Activated CD8-positive, alpha-beta T cell treated with anti-CD3 and anti-CD28 coated beads for 36 hours (primary cell): ENCODE measurements at regions of chr15 and their contacts with region 1.

Region 1: GRCh38 chr15:39580117-39580484 is 778 bp upstream of the THBS1 start:
- DNase-seq: peak; percentile 94
- ATAC-seq: peak; percentile 92
- H3K4me3 Mint-ChIP-seq: peak overlapping the region; percentile 66
- H3K27ac Mint-ChIP-seq: no peak overlapping the region
- H3K4me1 Mint-ChIP-seq: peaks cover 11% of the 10 kb centered on the region
- H3K27me3 Mint-ChIP-seq: peaks cover 48% of the 10 kb centered on the region
- CTCF ChIP-seq: peak; percentile 99

Region 2: DNA sequence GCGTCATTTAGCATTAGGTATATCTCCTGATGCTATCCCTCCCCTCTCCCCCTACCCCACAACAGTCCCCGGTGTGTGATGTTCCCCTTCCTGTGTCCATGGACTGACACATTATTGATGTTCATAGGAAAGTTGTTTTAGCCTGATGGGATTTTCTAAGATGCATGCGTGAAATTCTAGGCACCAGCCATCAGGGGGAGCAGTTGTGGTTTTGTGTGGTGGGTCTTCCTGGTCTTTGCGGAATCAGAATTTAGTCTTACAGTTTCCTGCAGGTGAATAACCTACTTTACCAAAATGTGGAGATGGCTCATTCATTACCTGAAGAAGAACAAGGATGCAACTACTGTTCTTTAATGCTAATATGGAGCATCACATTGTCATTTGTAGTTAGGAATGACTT is 454.2 kb before region 1 on chr15:
- CTCF ChIA-PET with region 1: interaction called, 4 read pairs
- POLR2A ChIA-PET with region 1: no interaction called
- intact Hi-C with region 1: loop called (anchors 10 kb)
- DNase-seq: peak; percentile 40
- ATAC-seq: no peak
- H3K4me3 Mint-ChIP-seq: no peak overlapping the region
- H3K27ac Mint-ChIP-seq: no peak overlapping the region
- H3K4me1 Mint-ChIP-seq: peaks cover 16% of the 10 kb centered on the region
- H3K27me3 Mint-ChIP-seq: peaks cover 28% of the 10 kb centered on the region
- CTCF ChIP-seq: peak; percentile 76

Region 3: GRCh38 chr15:39171944-39172368 is 408.1 kb before region 1 on chr15:
- CTCF ChIA-PET with region 1: interaction called, 15 read pairs
- POLR2A ChIA-PET with region 1: no interaction called
- intact Hi-C with region 1: loop called (anchors 2 kb)
- DNase-seq: peak; percentile 71
- ATAC-seq: peak; percentile 75
- H3K4me3 Mint-ChIP-seq: no peak overlapping the region
- H3K27ac Mint-ChIP-seq: no peak overlapping the region
- H3K4me1 Mint-ChIP-seq: peaks cover 4% of the 10 kb centered on the region
- H3K27me3 Mint-ChIP-seq: peaks cover 32% of the 10 kb centered on the region
- CTCF ChIP-seq: peak; percentile 39

Region 4: DNA sequence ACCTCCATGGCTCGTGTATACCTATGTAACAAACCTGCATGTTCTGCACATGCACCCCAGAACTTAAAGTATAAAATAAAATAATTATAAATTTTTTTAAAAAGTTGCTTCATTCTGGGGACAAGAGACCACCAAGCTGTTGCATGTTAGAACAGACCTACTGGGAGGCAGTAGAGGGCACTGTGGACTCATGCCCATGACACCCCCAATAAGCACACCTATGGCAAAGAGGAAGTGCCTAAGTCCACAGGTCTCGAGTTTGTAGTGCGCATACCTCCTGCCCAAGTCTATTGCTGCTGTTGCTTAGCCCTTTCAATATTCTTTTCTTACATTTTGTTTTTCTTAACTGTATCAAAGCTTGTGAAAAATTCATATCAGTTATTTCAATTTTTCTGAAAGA is 267.1 kb before region 1 on chr15:
- CTCF ChIA-PET with region 1: interaction called, 7 read pairs
- POLR2A ChIA-PET with region 1: no interaction called
- intact Hi-C with region 1: loop called (anchors 5 kb)
- DNase-seq: peak; percentile 26
- ATAC-seq: no peak
- H3K4me3 Mint-ChIP-seq: no peak overlapping the region
- H3K27ac Mint-ChIP-seq: no peak overlapping the region
- H3K4me1 Mint-ChIP-seq: no peaks in the 10 kb centered on the region
- H3K27me3 Mint-ChIP-seq: peaks cover 6% of the 10 kb centered on the region
- CTCF ChIP-seq: no peak

Region 5: DNA sequence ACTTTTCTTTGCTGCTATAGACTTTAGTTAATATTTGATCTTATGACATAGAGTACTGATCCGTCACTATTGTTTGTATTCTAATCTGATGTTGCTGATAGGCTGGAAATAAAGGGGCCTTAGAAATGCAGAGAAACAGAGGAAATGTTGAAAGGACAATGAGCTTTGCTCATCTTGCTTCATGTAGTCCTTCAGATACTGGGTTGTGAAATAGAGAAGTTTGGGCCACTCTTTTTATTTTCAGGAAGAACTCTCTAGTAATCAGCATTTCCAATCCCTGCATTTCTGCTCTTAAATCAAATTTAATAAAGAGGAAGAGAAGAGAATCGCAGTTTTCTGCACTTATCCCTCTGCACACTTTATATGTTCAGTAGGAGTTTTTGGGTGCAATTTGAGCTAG is 192.0 kb before region 1 on chr15:
- CTCF ChIA-PET with region 1: no interaction called
- POLR2A ChIA-PET with region 1: no interaction called
- intact Hi-C with region 1: no loop called
- DNase-seq: no peak
- ATAC-seq: no peak
- H3K4me3 Mint-ChIP-seq: no peak overlapping the region
- H3K27ac Mint-ChIP-seq: no peak overlapping the region
- H3K4me1 Mint-ChIP-seq: no peaks in the 10 kb centered on the region
- H3K27me3 Mint-ChIP-seq: peaks cover 2% of the 10 kb centered on the region
- CTCF ChIP-seq: no peak

Region 6: GRCh38 chr15:40092256-40092978 is 512.3 kb after region 1 on chr15:
- CTCF ChIA-PET with region 1: no interaction called
- POLR2A ChIA-PET with region 1: no interaction called
- intact Hi-C with region 1: no loop called
- DNase-seq: no peak
- ATAC-seq: no peak
- H3K4me3 Mint-ChIP-seq: no peak overlapping the region
- H3K27ac Mint-ChIP-seq: no peak overlapping the region
- H3K4me1 Mint-ChIP-seq: peaks cover 27% of the 10 kb centered on the region
- H3K27me3 Mint-ChIP-seq: no peaks in the 10 kb centered on the region
- CTCF ChIP-seq: no peak

Region 7: DNA sequence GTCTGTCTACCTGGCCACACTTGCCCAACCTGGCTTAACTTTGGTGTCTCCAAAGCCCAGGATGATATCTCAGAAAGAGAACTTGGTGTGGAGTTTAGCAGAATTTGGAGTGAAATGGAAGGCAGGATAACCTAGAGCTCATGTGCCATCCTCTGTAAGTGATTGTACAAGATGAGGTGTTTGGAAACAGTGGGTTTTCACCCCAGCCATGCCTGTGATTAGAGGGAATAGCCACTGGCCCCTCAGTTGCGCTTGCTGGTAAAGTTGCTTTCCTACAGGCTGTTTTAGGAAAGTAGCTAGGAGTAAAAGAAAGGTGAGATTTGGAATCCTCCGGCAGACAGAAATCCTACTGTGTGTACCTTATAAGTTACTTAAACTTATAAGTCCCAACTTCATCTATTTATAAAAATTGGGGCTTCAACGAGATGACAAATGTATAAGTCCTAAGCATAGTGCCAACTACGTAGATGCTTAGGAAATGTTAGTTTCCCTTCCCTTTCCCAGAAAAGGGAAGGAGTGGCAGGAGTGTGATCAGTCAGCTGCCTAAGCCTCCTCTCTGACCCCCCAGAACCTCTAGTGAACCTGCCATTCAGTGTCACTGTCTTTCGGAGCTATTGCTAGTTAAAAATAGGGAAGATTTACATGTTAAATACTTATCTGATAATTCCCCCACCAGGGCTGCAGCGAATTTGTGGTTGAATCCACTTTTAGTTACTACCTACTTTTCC is 542.0 kb after region 1 on chr15:
- CTCF ChIA-PET with region 1: no interaction called
- POLR2A ChIA-PET with region 1: no interaction called
- intact Hi-C with region 1: no loop called
- DNase-seq: no peak
- ATAC-seq: no peak
- H3K4me3 Mint-ChIP-seq: no peak overlapping the region
- H3K27ac Mint-ChIP-seq: no peak overlapping the region
- H3K4me1 Mint-ChIP-seq: no peaks in the 10 kb centered on the region
- H3K27me3 Mint-ChIP-seq: no peaks in the 10 kb centered on the region
- CTCF ChIP-seq: no peak